Calu3 (cell line): ENCODE measurements at regions of chr10 and their contacts with region 1.

Region 1: GRCh38 chr10:50653142-50653541 is 29.4 kb upstream of the SGMS1 start:
- DNase-seq: peak; percentile 10
- H3K4me3 Mint-ChIP-seq: no peak overlapping the region
- H3K27ac Mint-ChIP-seq: no peak overlapping the region
- H3K4me1 Mint-ChIP-seq: no peaks in the 10 kb centered on the region
- H3K27me3 Mint-ChIP-seq: no peaks in the 10 kb centered on the region
- CTCF ChIP-seq: peak; percentile 18

Region 2: DNA sequence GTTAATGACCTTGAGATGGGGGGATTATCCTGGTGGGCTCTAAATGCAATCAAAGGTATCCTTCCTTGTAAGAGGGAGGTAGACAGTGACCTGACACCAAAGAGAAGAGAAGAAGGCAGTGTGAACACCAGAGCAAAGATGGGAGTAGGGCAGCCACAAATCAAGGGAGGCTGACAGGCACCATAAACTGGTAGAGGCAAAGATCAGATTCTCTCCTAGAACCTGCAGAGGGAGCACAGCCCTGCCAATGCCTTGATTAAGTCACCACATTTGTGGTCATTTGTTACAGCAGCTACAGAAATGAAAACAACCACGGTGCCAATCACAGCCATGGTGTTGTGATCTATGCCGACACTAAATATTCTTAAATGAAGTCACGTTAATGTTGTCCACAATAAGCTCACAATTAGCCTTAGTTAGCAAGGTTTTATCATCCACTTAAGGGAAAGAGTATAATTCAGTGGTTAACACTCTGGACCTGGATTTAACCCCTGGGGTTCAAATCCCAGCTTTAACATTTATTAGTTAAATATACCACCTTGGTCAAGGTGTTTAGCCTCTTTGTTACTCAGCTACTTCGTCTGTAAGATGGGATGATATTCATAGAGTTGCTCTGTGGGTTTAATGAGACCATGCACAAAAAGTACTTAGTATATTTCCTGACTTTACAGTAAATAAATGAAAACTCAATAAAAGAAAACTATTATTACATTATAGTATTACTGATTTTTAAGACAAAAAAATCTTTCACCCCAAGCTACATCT is 100.2 kb before region 1 on chr10:
- CTCF ChIA-PET with region 1: no interaction called
- intact Hi-C with region 1: loop called (anchors 5 kb)
- DNase-seq: no peak
- H3K4me3 Mint-ChIP-seq: no peak overlapping the region
- H3K27ac Mint-ChIP-seq: no peak overlapping the region
- H3K4me1 Mint-ChIP-seq: peaks cover 30% of the 10 kb centered on the region
- H3K27me3 Mint-ChIP-seq: no peaks in the 10 kb centered on the region
- CTCF ChIP-seq: no peak